ENCODE measurements at regions of chr4 and their contacts with region 1.

Region 1: DNA sequence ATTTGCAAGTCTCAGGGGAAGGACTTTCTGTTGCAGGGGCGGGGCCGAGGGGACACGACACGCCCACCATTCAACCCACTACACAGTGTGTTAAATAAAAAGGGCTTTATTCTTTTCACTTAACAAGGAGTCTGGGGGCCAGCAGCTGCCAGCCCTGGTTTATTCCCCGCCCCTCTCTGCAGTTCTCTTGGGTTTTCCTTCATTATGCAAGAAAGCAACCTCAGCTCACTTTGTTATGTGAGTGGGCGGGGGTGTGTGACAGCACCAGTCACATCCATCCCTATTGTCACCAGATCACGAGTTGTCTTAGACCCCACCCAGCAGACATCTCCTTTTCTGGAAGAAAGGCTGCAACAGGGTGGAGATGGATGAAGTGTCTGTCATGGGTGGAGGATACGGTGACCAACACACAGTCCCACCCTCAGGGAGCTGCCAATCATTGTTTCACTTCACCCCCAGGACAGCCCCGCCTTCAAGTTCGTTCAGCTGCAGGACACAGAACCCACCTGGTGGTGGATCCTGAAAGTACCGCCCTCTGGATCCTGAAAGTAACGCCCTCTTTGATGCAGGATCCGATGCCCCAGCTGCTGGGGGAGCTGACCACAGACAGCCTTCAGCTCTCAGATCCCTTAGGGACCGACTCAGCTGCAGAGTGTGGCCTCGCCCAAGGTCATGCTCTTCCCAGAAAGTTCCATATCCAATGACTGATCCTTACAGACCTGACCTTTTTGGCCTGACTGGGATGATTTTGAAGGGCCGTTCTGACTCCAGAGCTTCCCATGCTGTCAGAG is 79.6 kb downstream of the SMIM20 start:
- DNase-seq: peak; percentile 55
- H3K4me3 Mint-ChIP-seq: no peak overlapping the region
- H3K27ac Mint-ChIP-seq: no peak overlapping the region
- H3K4me1 Mint-ChIP-seq: peaks cover 12% of the 10 kb centered on the region
- H3K27me3 Mint-ChIP-seq: no peaks in the 10 kb centered on the region

Region 2: DNA sequence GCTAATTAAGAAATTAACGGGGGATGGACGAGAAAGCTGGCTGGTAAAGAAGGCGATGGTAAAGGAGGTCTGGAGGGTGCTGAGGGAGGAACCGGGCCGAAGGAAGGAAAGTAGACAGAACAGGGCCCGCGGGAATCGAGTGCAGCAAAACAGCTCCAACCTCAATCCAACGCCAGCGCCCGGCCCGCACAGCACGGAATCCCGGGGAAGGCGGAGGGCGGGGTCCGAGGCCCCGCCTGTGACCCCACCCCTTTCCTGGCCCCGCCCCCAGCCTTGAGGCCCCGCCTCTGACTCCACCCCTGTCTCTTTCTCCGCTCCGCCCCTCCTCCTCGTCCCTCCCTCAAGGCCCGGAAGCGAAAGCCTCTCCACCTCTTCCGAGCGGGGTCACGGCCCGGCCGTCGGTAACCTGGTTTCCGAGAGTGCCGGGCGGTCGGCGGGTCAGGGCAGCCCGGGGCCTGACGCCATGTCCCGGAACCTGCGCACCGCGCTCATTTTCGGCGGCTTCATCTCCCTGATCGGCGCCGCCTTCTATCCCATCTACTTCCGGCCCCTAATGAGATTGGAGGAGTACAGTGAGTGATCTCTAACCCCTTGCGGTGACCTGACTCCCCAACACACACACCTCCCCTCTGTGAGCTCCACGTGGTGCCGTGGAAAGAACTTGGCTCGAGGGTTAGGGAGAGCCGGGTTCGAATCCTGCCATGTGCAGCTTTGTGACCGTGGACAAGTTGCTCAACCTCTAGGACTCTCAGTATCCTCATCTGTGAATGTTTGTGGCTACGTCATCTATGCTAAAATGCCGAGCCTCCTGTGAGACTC is 79.5 kb before region 1 on chr4 and contains the start of gene SMIM20:
- CTCF ChIA-PET with region 1: interaction called, 12 read pairs
- POLR2A ChIA-PET with region 1: no interaction called
- intact Hi-C with region 1: no loop called
- DNase-seq: peak; percentile 93
- H3K4me3 Mint-ChIP-seq: peak within 1 kb of the TSS; percentile 87
- H3K27ac Mint-ChIP-seq: peak within 1 kb of the TSS; percentile 94
- H3K4me1 Mint-ChIP-seq: peaks cover 17% of the 10 kb centered on the region
- H3K27me3 Mint-ChIP-seq: no peaks in the 10 kb centered on the region
- total RNA-seq, gene SMIM20: 26.0 to 28.0 TPM

Region 3: GRCh38 chr4:25958110-25958509 is 35.5 kb before region 1 on chr4:
- CTCF ChIA-PET with region 1: interaction called, 10 read pairs
- POLR2A ChIA-PET with region 1: no interaction called
- intact Hi-C with region 1: no loop called
- DNase-seq: no peak
- H3K4me3 Mint-ChIP-seq: no peak overlapping the region
- H3K27ac Mint-ChIP-seq: no peak overlapping the region
- H3K4me1 Mint-ChIP-seq: no peaks in the 10 kb centered on the region
- H3K27me3 Mint-ChIP-seq: peaks cover 9% of the 10 kb centered on the region

Region 4: GRCh38 chr4:26005764-26006163 is 12.2 kb after region 1 on chr4:
- CTCF ChIA-PET with region 1: interaction called, 20 read pairs
- POLR2A ChIA-PET with region 1: no interaction called
- intact Hi-C with region 1: no loop called
- DNase-seq: no peak
- H3K4me3 Mint-ChIP-seq: no peak overlapping the region
- H3K27ac Mint-ChIP-seq: no peak overlapping the region
- H3K4me1 Mint-ChIP-seq: peaks cover 7% of the 10 kb centered on the region
- H3K27me3 Mint-ChIP-seq: peaks cover 10% of the 10 kb centered on the region

Region 5: DNA sequence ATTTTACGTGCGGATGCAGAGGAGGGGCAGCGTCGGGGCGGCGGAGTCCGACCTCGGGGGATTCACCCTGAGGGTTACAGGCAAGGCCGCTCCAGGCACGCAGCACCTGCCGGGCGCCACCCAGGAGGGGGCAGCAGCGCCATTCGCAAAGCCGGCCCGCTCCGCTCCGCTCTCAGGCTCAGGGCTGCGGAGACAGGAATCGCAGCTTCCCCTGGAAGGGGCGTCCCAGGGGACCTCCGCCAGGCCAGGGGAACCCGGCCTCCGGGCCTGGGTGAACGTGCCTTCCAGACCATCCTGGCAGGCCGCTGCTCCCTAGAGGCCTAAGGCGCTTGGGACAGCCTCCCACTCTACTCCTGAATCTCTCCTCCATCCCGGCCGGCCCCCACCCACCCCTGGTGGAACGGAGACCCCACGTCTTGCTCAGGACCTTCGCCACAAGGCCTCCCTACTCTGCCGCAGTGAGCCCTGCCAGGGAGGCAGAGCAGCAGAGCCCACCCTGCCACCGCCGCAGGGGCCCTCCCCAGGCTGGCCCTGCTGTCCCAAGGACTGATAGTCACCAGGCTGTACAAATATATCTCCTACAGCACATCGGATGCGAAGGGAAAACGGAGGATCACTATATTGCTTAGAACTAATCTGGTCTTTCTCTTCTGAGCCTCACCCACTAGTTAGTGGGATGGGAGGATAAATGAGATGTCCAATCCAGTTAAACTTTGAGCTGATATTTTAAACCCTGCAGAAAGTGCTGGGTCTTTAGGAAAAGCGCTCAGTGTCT is 35.4 kb after region 1 on chr4:
- CTCF ChIA-PET with region 1: interaction called, 14 read pairs
- POLR2A ChIA-PET with region 1: no interaction called
- intact Hi-C with region 1: loop called (anchors 2 kb)
- DNase-seq: peak; percentile 85
- H3K4me3 Mint-ChIP-seq: no peak overlapping the region
- H3K27ac Mint-ChIP-seq: no peak overlapping the region
- H3K4me1 Mint-ChIP-seq: peaks cover 16% of the 10 kb centered on the region
- H3K27me3 Mint-ChIP-seq: peaks cover 2% of the 10 kb centered on the region

Region 6: GRCh38 chr4:26302031-26302899 is 308.7 kb after region 1 on chr4:
- CTCF ChIA-PET with region 1: no interaction called
- POLR2A ChIA-PET with region 1: no interaction called
- intact Hi-C with region 1: no loop called
- DNase-seq: no peak
- H3K4me3 Mint-ChIP-seq: no peak overlapping the region
- H3K27ac Mint-ChIP-seq: no peak overlapping the region
- H3K4me1 Mint-ChIP-seq: peaks cover 31% of the 10 kb centered on the region
- H3K27me3 Mint-ChIP-seq: no peaks in the 10 kb centered on the region

Region 7: DNA sequence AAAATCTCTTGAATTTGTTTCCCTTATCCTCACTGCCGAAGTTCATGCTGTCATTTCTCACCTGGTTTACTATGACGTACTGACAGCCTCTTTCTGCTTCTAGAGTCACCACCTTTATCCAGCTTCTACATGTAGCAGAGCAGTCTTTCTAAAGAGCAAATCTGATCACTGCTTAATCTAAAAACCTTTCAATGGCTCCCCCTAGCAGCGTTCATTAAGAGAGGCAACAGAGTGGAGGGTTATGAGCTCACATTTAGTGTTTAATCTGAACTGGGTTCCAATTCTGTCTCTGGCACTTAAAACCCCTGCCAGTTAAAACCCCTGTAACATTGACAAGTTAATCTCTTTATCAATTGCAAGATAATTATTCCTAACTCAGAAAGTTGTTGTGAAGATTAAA is 331.6 kb after region 1 on chr4:
- CTCF ChIA-PET with region 1: interaction called, 15 read pairs
- POLR2A ChIA-PET with region 1: no interaction called
- intact Hi-C with region 1: loop called (anchors 2 kb)
- DNase-seq: no peak
- H3K4me3 Mint-ChIP-seq: peak overlapping the region; percentile 62
- H3K27ac Mint-ChIP-seq: peak overlapping the region; percentile 78
- H3K4me1 Mint-ChIP-seq: peaks cover 47% of the 10 kb centered on the region
- H3K27me3 Mint-ChIP-seq: no peaks in the 10 kb centered on the region

Region 8: DNA sequence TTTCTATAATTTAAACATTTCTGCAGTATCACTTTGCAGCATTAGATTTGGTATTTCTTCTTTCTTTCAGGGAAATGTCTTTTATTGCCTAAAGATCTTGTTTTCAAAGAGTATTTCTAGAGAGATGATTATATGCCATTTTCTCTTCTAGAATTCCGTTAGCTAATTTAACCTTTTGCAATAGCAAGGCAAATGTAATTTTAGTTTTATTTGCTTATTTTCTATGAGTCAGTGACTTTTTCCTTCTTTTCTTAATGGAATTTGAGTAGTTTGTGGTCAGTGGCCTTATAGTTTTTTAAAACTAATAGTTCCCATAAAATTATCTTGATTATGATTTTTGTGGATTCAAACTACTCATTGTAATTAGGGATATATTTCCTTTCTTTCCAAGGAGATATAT is 424.5 kb after region 1 on chr4:
- CTCF ChIA-PET with region 1: interaction called, 16 read pairs
- POLR2A ChIA-PET with region 1: no interaction called
- intact Hi-C with region 1: no loop called
- DNase-seq: no peak
- H3K4me3 Mint-ChIP-seq: no peak overlapping the region
- H3K27ac Mint-ChIP-seq: no peak overlapping the region
- H3K4me1 Mint-ChIP-seq: peaks cover 5% of the 10 kb centered on the region
- H3K27me3 Mint-ChIP-seq: no peaks in the 10 kb centered on the region

Measured in activated CD4-positive, alpha-beta memory T cell treated with anti-CD3 and anti-CD28 coated beads for 36 hours (primary cell).